Heart right ventricle (tissue), 16 donors: ENCODE measurements at regions of chr1 and their contacts with region 1.

Region 1: DNA sequence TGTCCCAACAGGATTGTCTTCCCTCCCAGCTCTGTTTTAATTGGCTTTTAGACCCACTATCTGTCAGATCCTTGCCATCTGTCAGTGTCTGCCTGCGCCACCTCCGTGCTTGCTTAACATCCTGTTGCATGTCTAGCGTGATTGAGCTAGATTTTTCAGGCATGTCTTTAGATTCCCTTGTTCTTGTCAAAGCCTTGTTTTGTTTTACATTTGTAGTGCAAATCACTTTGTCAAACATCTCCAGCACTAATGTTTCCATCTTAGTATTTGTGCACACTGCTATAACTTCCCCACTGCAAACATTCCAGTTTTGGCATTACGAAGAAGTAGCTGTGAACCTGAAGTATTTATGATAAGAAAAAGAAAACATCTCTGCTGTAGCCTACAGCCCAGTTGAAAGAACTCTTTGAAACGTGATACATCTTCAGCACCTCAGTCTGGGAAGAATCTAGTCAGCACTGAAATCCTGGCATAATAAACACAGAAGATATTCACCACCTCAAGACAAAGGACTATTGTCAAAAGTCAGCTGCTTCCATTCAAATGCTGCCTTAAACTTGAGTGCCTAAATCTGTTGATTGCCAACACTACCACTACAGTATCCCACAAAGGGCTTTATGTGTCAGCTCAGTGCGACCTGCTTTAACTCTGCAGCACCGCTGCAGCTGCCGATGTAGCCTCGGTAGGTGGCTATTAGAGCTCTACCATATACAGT is 105.0 kb downstream of the FNBP1L start:
- DNase-seq: peak in 1 of 2 donors; percentile 31
- ATAC-seq: peak in 7 of 8 donors; percentile 43 to 59 (median 49)
- H3K4me3 ChIP-seq: no peak overlapping the region
- H3K27ac ChIP-seq: peak overlapping the region; percentile 41 to 82 (median 71)
- H3K4me1 ChIP-seq: peaks cover 12 to 60% (median 44%) of the 10 kb centered on the region in 9 donors
- H3K27me3 ChIP-seq: no peaks in the 10 kb centered on the region
- CTCF ChIP-seq: no peak

Region 2: DNA sequence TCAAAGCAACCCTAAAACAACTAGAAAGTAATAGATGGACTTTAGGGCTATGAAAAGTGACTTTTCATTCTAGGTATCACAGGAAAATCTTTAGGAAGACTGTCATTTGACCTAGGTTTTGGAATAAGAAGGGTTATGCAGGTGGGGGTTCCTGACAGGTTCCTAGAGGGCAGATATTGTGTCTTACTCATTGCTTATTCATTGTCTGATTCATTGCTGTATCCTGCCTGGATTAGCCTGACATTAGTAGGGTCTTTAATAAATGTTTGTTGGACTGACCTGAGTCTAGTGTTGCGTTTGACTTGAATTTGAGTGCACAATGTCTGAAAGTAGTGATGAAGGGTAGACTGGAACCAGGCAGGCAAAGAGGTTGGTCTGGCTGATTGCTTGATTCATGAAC is 99.0 kb before region 1 on chr1:
- intact Hi-C with region 1: loop called in 6 of 10 experiments (anchors 5 to 10 kb)
- DNase-seq: no peak
- ATAC-seq: no peak
- H3K4me3 ChIP-seq: no peak overlapping the region
- H3K27ac ChIP-seq: no peak overlapping the region
- H3K4me1 ChIP-seq: peaks cover 0 to 27% (median 19%) of the 10 kb centered on the region in 9 donors
- H3K27me3 ChIP-seq: peaks cover 0 to 10% (median 0%) of the 10 kb centered on the region in 7 donors
- CTCF ChIP-seq: no peak

Region 3: GRCh38 chr1:93615582-93616150 is 62.8 kb after region 1 on chr1:
- intact Hi-C with region 1: loop called in 1 of 10 experiments (anchors 5 kb)
- DNase-seq: no peak
- ATAC-seq: no peak
- H3K4me3 ChIP-seq: no peak overlapping the region
- H3K27ac ChIP-seq: peak overlapping the region in 8 of 10 donors; percentile 55 to 82 (median 74)
- H3K4me1 ChIP-seq: peaks cover 24 to 98% (median 65%) of the 10 kb centered on the region in 9 donors
- H3K27me3 ChIP-seq: no peaks in the 10 kb centered on the region
- CTCF ChIP-seq: no peak

Region 4: DNA sequence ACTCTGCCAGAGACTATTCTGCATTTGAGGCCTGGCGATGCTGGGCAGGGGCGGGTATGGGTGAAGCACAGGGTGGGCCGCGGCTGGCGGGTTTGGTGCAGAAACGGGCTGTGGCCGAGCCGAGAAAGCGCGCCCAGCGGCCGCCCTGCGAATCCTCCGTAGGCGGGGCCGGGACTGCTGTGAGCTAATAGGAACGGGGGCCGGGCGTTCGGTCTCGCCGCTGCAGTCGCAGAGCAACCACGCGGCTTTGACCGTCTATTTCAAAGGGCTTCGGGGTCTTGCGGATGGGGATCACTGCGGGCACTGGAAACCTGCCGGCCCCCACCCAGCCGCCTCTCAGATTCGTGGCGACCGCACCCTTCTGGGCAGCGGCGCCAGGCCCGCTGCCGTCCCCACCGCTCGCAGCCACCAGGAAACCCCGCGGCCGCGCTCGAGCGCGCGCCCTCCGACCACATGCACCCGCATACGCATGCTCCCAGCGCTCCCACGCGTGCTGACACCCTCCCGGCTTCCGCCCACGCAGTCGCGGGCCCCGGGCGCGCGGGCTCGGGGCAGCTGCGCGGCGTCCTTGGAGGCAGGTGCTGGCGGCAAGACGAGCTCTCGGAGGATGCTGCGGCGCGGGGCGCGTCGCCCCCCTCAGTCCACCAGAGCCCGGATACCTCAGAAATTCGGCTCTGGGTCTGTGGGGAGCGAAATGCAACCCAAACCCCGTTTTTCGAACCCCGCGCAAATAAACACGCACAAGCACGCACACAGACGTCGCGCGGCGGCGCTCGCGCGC is 293.5 kb after region 1 on chr1:
- intact Hi-C with region 1: loop called in 1 of 10 experiments (anchors 10 kb)
- DNase-seq: peak; percentile 89
- ATAC-seq: peak; percentile 64 to 81 (median 76)
- H3K4me3 ChIP-seq: peak overlapping the region; percentile 69 to 93 (median 86)
- H3K27ac ChIP-seq: peak overlapping the region; percentile 86 to 98 (median 96)
- H3K4me1 ChIP-seq: peaks cover 4 to 38% (median 31%) of the 10 kb centered on the region in 9 donors
- H3K27me3 ChIP-seq: no peaks in the 10 kb centered on the region
- CTCF ChIP-seq: peak in 7 of 9 donors; percentile 17 to 57 (median 40)